H1 (cell line): ENCODE measurements at regions of chr19 and their contacts with region 1.

Region 1: GRCh38 chr19:36528194-36528920 is at the start of gene ZNF260:
- DNase-seq: peak; percentile 92 to 96
- H3K4me3 ChIP-seq: peak within 1 kb of the TSS; percentile 72 to 98 (median 85)
- H3K27ac ChIP-seq: peak within 1 kb of the TSS; percentile 99
- H3K4me1 ChIP-seq: peaks cover 0 to 4% (median 2%) of the 10 kb centered on the region in 4 experiments; a peak in 6 of 7 replicates
- H3K27me3 ChIP-seq: no peaks in the 10 kb centered on the region
- CTCF ChIP-seq: no peak
- EP300 ChIP-seq: 0 out of 3 replicates have a peak, but pooled peaks of 1 of the 2 experiments have one; percentile 8
- POLR2A ChIP-seq: peak; percentile 80 to 84; a peak in 2 of 3 replicates
- RAD21 ChIP-seq: no peak
- total RNA-seq, gene ZNF260: 30.7 and 32.3 TPM in 2 replicates

Region 2: DNA sequence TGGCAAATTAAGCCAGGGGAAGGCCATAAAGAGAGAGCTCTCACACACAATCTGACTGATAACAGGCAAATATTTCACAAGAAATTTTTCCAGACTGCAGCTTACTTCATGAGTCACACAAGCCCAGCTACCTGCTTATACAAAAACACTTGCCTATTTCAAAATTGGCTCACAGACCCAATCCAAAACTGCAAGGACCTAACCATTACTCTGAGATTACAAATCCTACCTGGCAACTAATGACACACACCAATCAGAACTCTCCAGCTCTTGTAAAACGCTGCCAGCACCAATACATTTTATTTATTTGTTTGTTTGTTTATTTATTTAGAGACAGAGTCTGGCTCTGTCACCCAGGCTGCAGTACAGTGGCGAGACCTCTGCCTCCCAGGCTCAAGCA is 91.8 kb before region 1 on chr19:
- CTCF ChIA-PET with region 1: no interaction called
- POLR2A ChIA-PET with region 1: no interaction called
- DNase-seq: no peak
- H3K4me3 ChIP-seq: no peak overlapping the region
- H3K27ac ChIP-seq: no peak overlapping the region
- H3K4me1 ChIP-seq: no peaks in the 10 kb centered on the region
- H3K27me3 ChIP-seq: no peaks in the 10 kb centered on the region
- CTCF ChIP-seq: no peak
- EP300 ChIP-seq: no peak
- POLR2A ChIP-seq: no peak
- RAD21 ChIP-seq: no peak

Region 3: DNA sequence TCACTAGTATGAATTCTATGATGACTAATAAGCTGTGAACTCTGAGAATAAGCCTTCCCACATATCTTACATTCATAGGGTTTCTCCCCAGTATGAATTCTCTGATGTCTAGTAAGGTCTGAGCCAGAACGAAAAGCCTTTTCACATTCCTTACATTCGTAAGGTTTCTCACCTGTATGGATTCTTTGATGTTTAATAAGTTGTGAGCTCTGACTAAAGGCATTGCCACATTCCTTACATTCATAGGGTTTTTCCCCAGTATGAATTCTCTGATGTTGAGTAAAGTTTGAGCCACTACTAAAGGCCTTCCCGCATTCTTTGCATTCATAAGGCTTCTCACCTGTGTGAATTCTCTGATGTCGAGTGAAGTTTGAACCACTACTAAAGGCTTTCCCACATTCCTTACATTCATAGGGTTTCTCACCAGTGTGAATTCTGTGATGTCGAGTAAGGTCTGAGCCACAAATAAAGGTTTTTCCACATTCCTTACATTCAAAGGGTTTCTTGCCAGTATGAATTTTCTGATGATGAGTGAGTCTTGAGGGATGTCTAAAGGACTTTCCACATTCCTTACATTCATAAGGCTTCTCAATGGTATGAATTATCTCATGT is 79.2 kb before region 1 on chr19:
- CTCF ChIA-PET with region 1: no interaction called
- POLR2A ChIA-PET with region 1: no interaction called
- DNase-seq: no peak
- H3K4me3 ChIP-seq: no peak overlapping the region
- H3K27ac ChIP-seq: no peak overlapping the region
- H3K4me1 ChIP-seq: no peaks in the 10 kb centered on the region
- H3K27me3 ChIP-seq: no peaks in the 10 kb centered on the region
- CTCF ChIP-seq: no peak
- EP300 ChIP-seq: no peak
- POLR2A ChIP-seq: no peak
- RAD21 ChIP-seq: no peak

Region 4: DNA sequence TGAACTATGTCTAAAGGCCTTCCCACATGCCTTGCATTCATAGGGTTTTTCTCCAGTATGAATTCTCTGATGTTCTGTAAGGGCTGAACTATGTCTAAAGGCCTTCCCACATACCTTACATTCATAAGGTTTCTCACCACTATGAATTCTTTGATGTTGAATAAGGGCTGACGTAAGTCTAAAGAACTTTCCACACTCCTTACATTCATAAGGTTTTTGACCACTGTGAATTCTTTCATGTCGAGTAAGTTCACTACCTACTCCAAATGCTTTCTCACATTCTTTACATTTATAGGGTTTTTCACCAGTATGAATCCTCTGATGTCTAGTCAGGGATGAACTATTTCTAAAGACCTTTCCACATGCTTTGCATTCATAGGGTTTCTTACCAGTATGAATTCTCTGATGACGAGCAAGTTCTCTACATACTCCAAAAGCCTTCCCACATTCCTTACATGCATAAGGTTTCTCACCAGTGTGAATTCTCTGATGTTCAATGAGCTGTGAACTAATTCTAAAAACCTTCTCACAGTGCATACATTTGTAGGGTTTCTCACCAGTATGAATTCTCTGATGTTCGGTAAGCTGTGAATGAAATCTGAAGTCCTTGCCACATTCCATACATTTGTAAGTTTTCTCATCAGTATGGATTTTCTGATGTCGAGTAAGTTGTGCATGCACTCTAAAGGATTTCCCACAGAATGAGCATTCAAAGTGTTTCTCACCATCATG is 18.8 kb after region 1 on chr19:
- CTCF ChIA-PET with region 1: no interaction called
- POLR2A ChIA-PET with region 1: interaction called, 16 read pairs
- DNase-seq: no peak
- H3K4me3 ChIP-seq: no peak overlapping the region
- H3K27ac ChIP-seq: no peak overlapping the region
- H3K4me1 ChIP-seq: no peaks in the 10 kb centered on the region
- H3K27me3 ChIP-seq: no peaks in the 10 kb centered on the region
- CTCF ChIP-seq: no peak
- EP300 ChIP-seq: no peak
- POLR2A ChIP-seq: no peak
- RAD21 ChIP-seq: no peak

Region 5: DNA sequence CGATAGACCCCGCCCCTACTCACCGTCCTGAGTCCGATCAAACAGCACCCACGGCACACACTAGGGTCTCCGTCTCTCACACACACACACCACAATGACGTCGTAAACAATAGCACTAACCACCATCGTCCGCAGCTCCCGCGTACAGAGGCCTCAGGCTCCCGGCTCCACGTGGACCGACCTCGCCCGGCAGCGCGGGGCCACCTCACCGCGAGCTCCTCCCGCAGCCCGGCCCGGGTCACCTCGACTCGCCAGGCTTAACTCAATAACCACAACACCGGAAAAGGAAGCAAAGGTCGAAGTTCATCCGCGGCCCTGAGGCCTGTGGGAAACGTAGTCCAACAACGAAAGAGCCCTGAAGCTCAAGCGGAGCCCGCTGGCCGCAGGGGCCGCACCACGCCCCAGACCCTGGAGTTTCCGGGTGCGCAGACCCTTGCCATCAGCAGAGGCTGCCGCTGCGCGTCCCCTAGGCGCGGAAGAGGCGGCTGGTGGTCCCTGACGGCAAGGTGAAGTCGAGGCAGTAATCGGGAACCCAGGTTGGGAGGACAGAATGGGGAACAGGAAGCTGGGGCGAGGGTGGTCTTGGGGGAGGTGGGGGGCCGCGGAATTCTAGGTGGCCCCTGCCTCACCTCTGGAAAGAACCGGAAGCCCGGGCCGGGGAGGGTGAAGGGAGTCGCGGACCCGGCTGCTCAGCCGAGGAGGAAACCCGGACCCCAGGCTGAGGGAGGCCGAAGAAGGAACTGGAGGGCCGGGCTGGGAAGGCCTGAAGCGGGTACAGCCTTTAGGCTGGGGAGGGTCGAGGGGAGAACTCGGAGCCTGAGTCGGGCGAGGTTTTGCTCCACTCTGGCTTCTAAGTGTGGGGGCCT is 44.9 kb after region 1 on chr19 and contains the start of gene ZNF529:
- CTCF ChIA-PET with region 1: no interaction called
- POLR2A ChIA-PET with region 1: interaction called, 31 read pairs
- DNase-seq: peak; percentile 86 to 88
- H3K4me3 ChIP-seq: peak within 1 kb of the TSS; percentile 93 to 100 (median 96)
- H3K27ac ChIP-seq: peak within 1 kb of the TSS; percentile 91
- H3K4me1 ChIP-seq: peaks cover 0 to 4% (median 0%) of the 10 kb centered on the region in 4 experiments; a peak in 2 of 7 replicates
- H3K27me3 ChIP-seq: no peaks in the 10 kb centered on the region
- CTCF ChIP-seq: peak in 1 of 3 experiments; percentile 14; a peak in 1 of 4 replicates
- EP300 ChIP-seq: no peak
- POLR2A ChIP-seq: peak; percentile 90 to 92
- RAD21 ChIP-seq: peak; percentile 11 to 20; a peak in 2 of 4 replicates
- total RNA-seq, gene ZNF529: 12.4 and 14.1 TPM in 2 replicates

Region 6: DNA sequence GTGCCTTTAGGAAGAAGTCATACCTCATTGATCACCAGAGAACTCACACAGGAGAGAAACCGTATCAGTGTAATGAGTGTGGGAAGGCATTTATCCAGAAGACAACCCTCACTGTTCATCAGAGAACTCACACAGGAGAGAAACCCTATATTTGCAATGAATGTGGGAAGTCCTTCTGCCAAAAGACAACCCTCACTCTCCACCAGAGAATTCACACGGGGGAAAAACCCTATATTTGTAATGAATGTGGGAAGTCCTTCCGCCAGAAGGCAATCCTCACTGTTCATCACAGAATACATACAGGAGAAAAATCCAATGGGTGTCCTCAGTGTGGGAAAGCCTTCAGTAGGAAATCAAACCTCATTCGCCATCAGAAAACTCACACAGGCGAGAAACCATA is 98.7 kb after region 1 on chr19:
- CTCF ChIA-PET with region 1: no interaction called
- POLR2A ChIA-PET with region 1: no interaction called
- DNase-seq: no peak
- H3K4me3 ChIP-seq: no peak overlapping the region
- H3K27ac ChIP-seq: no peak overlapping the region
- H3K4me1 ChIP-seq: no peaks in the 10 kb centered on the region
- H3K27me3 ChIP-seq: peaks cover 0 to 1% (median 0%) of the 10 kb centered on the region in 4 experiments; a peak in 1 of 7 replicates
- CTCF ChIP-seq: no peak
- EP300 ChIP-seq: no peak
- POLR2A ChIP-seq: no peak
- RAD21 ChIP-seq: no peak